ENCODE measurements at regions of chr7 and their contacts with region 1.

Region 1: DNA sequence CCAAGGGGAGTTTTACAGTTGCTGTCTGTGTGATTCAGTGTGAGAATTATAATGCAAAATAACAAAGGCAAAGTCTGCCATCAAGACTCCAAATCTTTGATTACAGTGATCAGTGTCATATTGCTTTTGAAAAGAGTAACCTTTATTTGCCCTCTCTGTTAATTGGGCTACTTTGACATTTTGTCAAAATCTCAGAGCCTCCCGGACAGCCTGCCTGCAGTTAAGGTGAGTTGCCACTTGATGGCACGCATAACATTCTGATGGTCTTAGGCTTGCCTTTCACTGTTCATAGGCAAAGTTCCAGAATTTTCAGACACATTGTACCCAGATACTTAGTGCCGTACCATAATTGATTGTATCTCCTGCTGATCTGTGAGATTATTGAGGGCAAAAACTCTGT is 253.5 kb downstream of the ABCA13 start:
- DNase-seq: no peak
- H3K4me3 ChIP-seq: no peak overlapping the region
- H3K27ac ChIP-seq: no peak overlapping the region
- H3K27me3 ChIP-seq: no peaks in the 10 kb centered on the region
- CTCF ChIP-seq: peak in 34 of 56 donors; percentile 8 to 58 (median 28)

Region 2: DNA sequence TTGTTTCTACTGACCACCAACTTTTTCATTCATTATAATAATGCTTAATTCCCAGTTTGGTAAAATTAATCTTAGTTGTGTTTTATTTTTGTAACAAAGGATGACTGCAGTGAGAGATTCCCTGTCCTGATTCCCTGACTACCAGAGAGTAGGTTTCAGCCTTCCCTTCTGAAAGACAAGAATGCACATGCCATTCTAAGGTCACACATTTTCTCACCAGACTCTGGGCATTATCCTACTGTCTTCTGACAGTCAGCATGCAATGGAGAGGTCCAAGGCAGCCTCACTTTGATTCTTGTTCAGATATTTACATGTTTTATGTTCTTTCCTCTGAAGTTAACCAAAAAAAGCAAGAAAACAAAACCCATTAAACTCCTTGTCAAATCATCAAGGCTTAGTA is 126.9 kb after region 1 on chr7:
- intact Hi-C with region 1: no loop called
- DNase-seq: no peak
- H3K4me3 ChIP-seq: no peak overlapping the region
- H3K27ac ChIP-seq: no peak overlapping the region
- H3K27me3 ChIP-seq: no peaks in the 10 kb centered on the region
- CTCF ChIP-seq: no peak

Region 3: GRCh38 chr7:48875045-48875916 is 450.6 kb after region 1 on chr7:
- intact Hi-C with region 1: loop called in 1 of 2 experiments (anchors 10 kb)
- DNase-seq: peak; percentile 50 to 78 (median 62)
- H3K4me3 ChIP-seq: no peak overlapping the region
- H3K27ac ChIP-seq: no peak overlapping the region
- H3K27me3 ChIP-seq: peaks cover 0 to 3% (median 0%) of the 10 kb centered on the region in 45 donors
- CTCF ChIP-seq: peak in 55 of 56 donors; percentile 20 to 90 (median 66)